HEK293T (cell line): ENCODE measurements at regions of chr19 and their contacts with region 1.

Region 1: DNA sequence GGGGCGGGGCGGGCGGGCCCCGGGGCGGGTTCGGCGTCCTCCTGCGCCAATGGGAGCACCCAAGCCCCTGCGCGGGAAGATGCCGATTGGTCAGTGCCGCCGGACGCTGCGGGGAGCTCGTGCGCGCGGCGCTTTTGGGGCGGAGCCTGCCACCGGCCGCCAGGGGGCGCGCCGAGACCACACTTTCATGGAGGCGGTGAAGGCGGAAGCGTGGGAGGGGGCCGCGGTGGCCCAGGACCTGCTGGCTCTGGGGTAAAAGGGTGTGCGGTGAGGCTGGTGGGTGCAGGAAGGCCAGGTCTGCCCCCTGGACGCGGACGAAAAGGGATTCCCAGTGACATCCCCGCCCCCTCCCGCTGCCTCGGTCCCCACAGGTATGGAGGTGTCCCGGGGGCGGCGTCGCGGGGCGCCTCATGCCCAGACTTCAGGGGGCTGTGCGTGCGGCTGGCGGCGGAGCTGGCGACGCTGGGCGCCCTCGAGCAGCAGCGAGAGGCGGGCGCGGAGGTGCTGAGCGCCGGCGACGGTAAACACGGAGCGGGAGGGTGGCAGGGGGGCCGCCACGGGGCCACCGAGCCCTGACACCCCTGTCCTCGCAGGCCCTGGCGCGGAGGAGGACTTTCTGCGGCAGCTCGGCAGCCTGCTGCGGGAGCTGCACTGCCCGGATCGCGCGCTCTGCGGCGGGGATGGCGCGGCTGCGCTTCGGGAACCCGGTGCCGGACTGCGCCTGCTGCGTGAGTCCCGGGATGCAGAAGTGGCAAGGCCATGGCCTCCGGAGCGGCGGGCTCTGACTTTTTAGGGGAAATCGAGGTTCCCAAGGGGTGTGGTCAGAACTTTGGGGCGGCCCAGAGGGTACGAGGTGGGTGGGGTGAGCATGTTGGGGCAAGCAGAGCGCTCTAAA is at the start of gene FAM98C:
- DNase-seq: peak; percentile 99

Region 2: DNA sequence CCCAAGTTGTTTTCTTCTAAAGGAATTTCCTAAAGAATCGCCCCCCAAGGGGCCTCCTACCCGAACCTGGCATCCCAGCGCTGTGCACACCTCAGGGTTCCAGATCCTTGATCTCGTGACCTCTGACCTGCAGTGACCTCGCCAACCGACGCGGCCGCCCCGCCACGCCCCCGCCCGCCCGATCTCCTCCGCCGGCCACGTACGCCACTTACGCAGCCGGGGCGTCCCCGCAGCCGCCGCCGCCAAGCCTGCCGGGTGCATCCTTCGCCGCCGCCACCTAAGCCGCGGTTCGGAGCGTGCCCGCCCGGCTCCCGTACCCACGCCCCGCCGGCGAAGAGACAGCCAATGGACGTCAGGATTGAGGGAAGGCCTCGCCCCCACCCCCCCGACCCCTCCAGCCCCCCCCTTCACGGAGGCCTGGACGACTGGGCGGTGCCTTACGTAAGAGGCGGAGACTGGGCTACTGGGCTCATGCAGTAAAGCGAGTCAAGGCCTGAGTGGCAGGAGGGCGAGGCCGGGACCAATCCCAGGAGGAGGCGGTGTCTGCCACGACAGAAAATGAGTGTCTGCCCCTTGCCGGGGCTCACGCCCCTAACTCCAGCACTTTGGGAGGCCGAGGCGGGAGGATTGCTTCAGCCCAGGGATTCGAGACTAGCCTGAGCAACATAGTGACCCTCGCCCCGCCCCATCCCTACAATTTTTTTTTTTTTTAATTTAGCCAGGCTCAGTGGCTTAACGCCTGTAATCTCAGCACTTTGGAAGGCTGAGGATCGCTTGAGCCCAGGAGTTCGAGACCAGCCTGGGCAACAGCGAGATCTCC is 87.3 kb before region 1 on chr19 and contains the start of gene YIF1B:
- CTCF ChIA-PET with region 1: no interaction called
- POLR2A ChIA-PET with region 1: no interaction called
- DNase-seq: peak; percentile 97

Region 3: GRCh38 chr19:38387550-38388348 is 15.5 kb before region 1 on chr19 and contains the start of gene GGN:
- CTCF ChIA-PET with region 1: interaction called, 8 read pairs
- POLR2A ChIA-PET with region 1: interaction called, 23 read pairs
- DNase-seq: peak; percentile 94

Region 4: DNA sequence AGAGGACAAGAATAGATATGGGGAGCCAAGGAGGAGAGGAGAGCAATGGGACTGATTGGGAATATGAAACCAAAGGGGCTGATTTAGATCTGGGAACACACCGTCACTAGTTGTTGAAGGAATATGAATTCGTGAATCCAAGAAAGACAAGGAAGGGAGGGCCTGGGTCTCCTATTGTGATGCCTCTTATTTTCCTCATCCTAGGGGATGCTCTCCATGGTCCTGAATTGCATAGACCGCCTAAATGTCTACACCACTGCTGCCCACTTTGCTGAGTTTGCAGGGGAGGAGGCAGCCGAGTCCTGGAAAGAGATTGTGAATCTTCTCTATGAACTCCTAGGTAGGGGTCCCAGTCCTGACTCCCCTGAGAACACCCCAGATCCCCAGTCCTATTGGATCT is 51.8 kb after region 1 on chr19:
- CTCF ChIA-PET with region 1: no interaction called
- POLR2A ChIA-PET with region 1: no interaction called
- DNase-seq: no peak

Region 5: DNA sequence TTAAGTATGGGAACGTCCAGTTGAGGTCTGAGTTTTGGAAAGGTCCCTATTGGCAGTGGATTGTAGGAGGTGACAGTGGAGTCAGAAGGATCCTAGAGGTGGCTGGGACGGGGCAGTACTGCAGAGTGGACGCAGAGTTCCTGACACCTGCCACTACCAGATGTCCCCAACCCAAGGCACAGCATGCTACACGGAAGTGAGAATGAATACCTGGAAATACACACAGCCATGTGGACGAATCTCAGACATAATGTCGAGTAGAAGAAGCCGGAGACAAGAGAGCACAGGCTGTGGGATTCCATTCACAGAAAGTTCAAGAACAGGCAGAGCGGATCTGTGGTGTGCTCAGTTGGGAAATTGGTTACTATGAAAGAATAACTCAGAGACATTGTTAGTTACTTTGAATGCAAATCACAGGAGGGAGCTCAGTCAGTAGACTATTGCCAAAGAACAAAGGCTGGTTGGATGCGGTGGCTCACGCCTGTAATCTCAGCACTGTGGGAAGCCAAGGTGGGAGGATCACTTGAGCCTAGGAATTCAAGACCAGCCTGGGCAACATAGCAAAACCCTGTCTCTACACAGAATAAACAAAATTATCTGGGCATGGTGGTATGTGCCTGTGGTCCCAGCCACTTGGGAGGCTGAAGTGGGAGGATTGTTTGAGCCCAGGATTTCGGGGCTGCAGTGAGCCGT is 67.7 kb after region 1 on chr19:
- CTCF ChIA-PET with region 1: interaction called, 11 read pairs
- POLR2A ChIA-PET with region 1: no interaction called
- DNase-seq: no peak